Activated CD4-positive, alpha-beta T cell treated with anti-CD3 and anti-CD28 coated beads for 36 hours (primary cell): ENCODE measurements at regions of chr7 and their contacts with region 1.

Region 1: GRCh38 chr7:21261627-21262594 is 166.0 kb upstream of the SP4 start:
- DNase-seq: peak; percentile 64
- ATAC-seq: peak; percentile 81
- H3K4me3 Mint-ChIP-seq: no peak overlapping the region
- H3K27ac Mint-ChIP-seq: no peak overlapping the region
- H3K4me1 Mint-ChIP-seq: peaks cover 9% of the 10 kb centered on the region
- H3K27me3 Mint-ChIP-seq: peaks cover 3% of the 10 kb centered on the region

Region 2: DNA sequence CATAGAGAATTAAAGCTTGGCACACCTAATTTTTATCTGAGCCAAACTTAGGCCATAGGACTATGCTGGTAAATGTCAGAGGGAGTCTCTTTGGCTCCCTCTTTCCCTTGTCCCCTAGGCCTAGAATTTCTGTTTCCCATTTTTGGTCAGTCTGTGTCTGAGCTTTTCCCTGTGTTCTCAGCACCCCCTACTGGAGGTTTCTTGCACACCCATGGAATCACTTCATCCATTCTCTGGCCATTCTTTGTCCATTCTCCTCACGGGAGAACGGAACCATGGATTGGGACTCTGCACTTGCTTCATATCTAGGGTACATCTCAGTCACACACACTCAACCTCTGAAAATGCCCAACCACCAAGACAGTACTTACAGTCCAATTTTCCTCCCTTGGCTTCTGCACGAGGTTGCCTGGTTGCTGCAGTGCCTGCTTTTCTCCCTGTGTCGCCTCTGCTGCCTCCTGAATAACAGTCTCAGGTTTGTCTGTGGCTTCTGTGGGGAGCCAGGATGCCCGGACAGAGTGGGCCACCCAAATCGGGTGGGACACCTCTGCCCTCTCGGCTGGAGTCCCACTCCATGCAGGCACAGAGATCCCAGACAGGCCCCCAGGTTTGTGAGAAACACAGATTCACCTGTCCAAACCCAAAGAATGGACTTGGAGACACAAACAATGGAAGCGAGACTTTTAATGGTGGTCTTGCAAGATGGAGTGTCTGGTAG is 245.9 kb after region 1 on chr7:
- CTCF ChIA-PET with region 1: interaction called, 6 read pairs
- POLR2A ChIA-PET with region 1: no interaction called
- intact Hi-C with region 1: loop called in 1 of 2 experiments (anchors 1 kb)
- DNase-seq: peak; percentile 48
- ATAC-seq: peak; percentile 47
- H3K4me3 Mint-ChIP-seq: no peak overlapping the region
- H3K27ac Mint-ChIP-seq: no peak overlapping the region
- H3K4me1 Mint-ChIP-seq: no peaks in the 10 kb centered on the region
- H3K27me3 Mint-ChIP-seq: no peaks in the 10 kb centered on the region

Region 3: DNA sequence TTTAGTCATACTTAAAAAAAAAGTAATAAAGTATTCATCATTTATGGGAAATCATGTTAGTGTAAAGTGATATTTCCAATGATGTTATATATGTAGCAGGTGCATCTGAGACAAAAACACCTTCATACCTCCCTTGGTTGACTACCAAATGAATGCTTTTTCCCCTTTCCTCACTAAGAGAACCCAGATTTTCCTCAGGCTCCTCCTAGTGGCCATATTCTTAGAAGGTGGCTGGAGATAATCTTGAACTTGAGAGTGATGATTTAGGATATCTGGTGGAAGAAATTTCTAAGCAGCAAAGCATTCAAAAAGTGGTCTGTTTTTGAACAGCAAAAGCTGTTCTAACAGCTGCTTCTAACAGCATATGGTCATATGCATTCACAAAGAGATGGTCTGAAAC is 264.1 kb after region 1 on chr7:
- CTCF ChIA-PET with region 1: interaction called, 3 read pairs
- POLR2A ChIA-PET with region 1: no interaction called
- intact Hi-C with region 1: loop called in 1 of 2 experiments (anchors 5 kb)
- DNase-seq: no peak
- ATAC-seq: no peak
- H3K4me3 Mint-ChIP-seq: no peak overlapping the region
- H3K27ac Mint-ChIP-seq: no peak overlapping the region
- H3K4me1 Mint-ChIP-seq: no peaks in the 10 kb centered on the region
- H3K27me3 Mint-ChIP-seq: no peaks in the 10 kb centered on the region

Region 4: DNA sequence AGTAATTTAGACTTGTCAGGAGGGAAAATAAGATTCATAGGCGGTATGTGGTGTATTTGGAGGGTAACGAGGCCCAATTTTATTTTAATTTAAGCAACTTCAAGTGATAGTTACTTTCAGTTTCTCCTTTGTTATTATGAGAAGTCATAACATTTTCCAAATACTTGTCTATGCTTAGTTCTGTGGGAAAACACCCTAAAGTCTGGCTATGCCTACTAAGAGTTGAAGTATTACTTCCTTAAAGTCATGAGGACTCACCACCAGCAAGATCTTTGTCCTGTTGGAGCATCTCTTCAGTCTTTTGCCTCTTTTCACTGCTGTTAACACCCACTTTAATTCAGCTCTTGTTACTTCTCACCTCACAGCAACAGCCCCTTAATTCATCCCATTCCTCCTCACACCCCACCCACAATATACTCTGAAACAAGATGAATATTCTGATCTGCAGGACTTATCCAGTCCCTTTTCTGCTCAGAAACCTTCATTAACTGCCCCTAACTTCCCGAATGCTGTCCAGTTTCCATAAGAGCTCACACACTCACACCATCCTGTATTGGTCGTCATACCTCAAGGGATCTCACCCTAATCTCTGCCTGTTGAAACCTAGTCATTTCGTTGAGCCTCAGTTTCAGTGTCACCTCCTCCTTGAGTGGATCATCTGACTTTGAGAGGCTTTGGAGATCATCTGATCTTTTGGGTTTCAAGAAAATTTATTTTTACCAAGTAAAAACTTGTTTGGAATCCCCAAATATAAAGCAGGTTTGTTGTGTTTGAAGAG is 342.2 kb after region 1 on chr7:
- CTCF ChIA-PET with region 1: no interaction called
- POLR2A ChIA-PET with region 1: no interaction called
- intact Hi-C with region 1: no loop called
- DNase-seq: no peak
- ATAC-seq: peak; percentile 66
- H3K4me3 Mint-ChIP-seq: no peak overlapping the region
- H3K27ac Mint-ChIP-seq: peak overlapping the region; percentile 17
- H3K4me1 Mint-ChIP-seq: peaks cover 8% of the 10 kb centered on the region
- H3K27me3 Mint-ChIP-seq: peaks cover 5% of the 10 kb centered on the region

Region 5: GRCh38 chr7:21767300-21767900 is 505.5 kb after region 1 on chr7:
- CTCF ChIA-PET with region 1: interaction called, 3 read pairs
- POLR2A ChIA-PET with region 1: no interaction called
- intact Hi-C with region 1: loop called (anchors 1 to 2 kb)
- DNase-seq: peak; percentile 49
- ATAC-seq: peak; percentile 84
- H3K4me3 Mint-ChIP-seq: no peak overlapping the region
- H3K27ac Mint-ChIP-seq: no peak overlapping the region
- H3K4me1 Mint-ChIP-seq: peaks cover 14% of the 10 kb centered on the region
- H3K27me3 Mint-ChIP-seq: no peaks in the 10 kb centered on the region